Ovary (tissue), 10 donors: ENCODE measurements at regions of chr1 and their contacts with region 1.

Region 1: DNA sequence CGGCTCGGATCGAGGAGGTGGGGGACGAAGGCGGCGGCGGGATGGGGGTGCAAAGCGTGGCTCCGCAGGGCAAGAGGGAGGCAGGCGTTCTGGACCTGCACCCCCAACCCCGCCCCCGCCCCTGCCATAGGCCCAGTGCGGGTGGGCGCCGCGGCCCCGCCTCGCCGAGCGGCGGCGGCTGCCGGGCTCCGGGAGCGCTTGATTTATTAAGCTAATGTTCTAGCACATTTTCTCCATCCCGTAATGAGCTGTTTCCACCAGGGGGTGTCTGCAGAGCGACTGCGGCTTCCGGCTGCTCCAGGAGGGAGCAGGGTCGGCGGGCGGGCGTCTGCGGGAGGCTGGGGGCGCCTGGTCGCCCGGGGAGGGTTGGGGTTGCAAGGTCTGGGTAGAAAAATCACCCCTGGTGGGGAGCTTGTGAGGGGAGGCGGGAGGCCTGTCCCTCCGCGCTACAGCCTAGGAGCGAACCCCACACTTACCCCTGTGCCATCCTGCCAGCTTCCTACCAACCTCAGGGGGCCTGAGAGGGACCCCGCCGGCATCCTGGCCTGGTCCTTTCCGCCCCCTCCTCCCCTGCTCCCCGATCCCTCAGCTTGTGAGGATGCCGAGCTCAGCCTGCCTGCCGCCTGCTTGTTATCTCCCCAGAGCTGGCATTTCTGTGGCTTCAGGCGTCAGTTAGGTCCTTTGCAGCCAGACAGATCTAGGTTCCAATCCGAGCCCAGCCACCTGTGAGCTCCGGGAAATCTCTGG is 48.5 kb upstream of the ACOT11 start:
- DNase-seq: peak; percentile 50 to 70 (median 57)
- H3K4me3 ChIP-seq: peak overlapping the region; percentile 36
- H3K27ac ChIP-seq: no peak overlapping the region
- H3K4me1 ChIP-seq: no peaks in the 10 kb centered on the region
- H3K27me3 ChIP-seq: no peaks in the 10 kb centered on the region
- CTCF ChIP-seq: peak in 2 of 3 donors; percentile 15 to 17
- EP300 ChIP-seq: no peak
- POLR2A ChIP-seq: no peak

Region 2: GRCh38 chr1:53860967-53861411 is 638.5 kb before region 1 on chr1:
- intact Hi-C with region 1: loop called in 1 of 4 experiments (anchors 10 kb)
- DNase-seq: peak in 3 of 5 donors; percentile 26 to 37 (median 35)
- H3K4me3 ChIP-seq: no peak overlapping the region
- H3K27ac ChIP-seq: no peak overlapping the region
- H3K4me1 ChIP-seq: no peaks in the 10 kb centered on the region
- H3K27me3 ChIP-seq: no peaks in the 10 kb centered on the region
- CTCF ChIP-seq: peak; percentile 44 to 53 (median 49)
- EP300 ChIP-seq: no peak
- POLR2A ChIP-seq: no peak

Region 3: DNA sequence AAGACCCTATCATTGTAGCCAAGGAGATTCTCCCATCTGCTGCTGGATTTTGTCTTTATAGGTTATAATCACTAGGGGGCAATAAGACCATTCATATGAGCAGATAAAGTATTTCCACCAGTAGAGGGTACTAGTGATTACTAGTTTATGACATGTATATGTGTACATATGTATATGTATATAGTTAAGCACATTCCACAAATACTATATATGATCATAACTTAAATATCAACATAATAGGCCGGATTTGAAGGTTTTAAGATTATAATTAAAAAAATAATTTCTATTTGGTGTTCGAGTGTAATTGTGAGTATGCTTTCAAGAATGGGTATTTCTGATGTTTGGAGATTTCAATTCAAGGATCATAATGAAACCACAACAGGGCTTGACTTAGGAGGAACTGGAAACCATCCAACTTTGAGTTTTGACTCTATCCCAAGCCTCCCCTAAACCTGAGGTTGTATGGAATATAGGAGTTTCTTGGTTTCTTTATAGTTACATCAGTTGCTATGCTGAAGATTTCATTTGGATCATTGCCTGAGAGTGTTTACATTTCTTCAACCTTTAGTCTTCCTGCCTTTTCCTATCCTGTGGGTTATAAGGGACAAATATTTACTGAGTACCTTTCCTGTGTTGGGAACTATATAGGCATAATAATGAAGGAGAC is 429.2 kb before region 1 on chr1:
- intact Hi-C with region 1: loop called (anchors 5 to 10 kb)
- DNase-seq: no peak
- H3K4me3 ChIP-seq: no peak overlapping the region
- H3K27ac ChIP-seq: no peak overlapping the region
- H3K4me1 ChIP-seq: peaks cover 1% of the 10 kb centered on the region
- H3K27me3 ChIP-seq: no peaks in the 10 kb centered on the region
- CTCF ChIP-seq: peak; percentile 45 to 89 (median 73)
- EP300 ChIP-seq: no peak
- POLR2A ChIP-seq: no peak

Region 4: DNA sequence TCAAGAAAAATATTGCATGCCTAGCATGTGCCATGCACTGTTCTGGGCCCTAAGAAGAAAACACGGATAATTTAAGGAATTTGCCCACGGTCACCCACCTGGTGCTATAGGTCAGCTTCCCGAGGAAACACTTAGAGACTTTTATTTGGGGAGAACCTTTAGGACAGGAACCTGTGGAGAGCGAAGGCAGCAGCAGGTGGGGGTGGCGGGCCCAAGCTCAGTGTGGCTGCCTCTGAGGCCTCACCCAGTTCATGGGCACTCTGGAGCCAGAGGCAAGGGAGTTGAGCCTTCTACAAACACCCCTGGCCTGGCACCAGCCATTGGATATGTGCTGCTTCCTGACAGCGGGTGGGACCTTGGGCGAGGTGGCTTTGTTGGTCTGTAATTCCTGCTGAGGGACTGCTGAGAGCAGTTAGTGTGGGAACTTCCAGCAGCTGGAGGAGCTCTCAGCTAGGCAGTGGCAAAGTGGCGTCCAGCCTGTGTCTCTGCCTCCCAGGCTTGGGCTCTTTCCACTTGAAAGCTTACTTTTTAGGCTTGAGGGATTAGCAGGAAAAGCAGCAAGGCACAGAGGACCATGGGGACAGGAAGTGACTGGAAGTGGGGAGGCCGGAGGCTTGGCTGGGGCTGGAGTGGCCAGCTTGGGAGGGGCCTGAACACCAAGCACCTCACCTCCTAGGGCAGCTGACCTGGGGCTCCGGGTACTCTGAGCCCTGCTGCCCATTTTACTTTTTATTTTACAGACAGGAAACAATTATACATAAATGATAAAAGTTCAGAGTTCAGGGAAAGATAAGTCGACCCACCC is 280.4 kb before region 1 on chr1:
- intact Hi-C with region 1: loop called in 1 of 4 experiments (anchors 10 kb)
- DNase-seq: peak in 1 of 5 donors; percentile 25
- H3K4me3 ChIP-seq: no peak overlapping the region
- H3K27ac ChIP-seq: peak overlapping the region; percentile 45 to 59
- H3K4me1 ChIP-seq: peaks cover 14% of the 10 kb centered on the region
- H3K27me3 ChIP-seq: no peaks in the 10 kb centered on the region
- CTCF ChIP-seq: no peak
- EP300 ChIP-seq: no peak
- POLR2A ChIP-seq: no peak

Region 5: DNA sequence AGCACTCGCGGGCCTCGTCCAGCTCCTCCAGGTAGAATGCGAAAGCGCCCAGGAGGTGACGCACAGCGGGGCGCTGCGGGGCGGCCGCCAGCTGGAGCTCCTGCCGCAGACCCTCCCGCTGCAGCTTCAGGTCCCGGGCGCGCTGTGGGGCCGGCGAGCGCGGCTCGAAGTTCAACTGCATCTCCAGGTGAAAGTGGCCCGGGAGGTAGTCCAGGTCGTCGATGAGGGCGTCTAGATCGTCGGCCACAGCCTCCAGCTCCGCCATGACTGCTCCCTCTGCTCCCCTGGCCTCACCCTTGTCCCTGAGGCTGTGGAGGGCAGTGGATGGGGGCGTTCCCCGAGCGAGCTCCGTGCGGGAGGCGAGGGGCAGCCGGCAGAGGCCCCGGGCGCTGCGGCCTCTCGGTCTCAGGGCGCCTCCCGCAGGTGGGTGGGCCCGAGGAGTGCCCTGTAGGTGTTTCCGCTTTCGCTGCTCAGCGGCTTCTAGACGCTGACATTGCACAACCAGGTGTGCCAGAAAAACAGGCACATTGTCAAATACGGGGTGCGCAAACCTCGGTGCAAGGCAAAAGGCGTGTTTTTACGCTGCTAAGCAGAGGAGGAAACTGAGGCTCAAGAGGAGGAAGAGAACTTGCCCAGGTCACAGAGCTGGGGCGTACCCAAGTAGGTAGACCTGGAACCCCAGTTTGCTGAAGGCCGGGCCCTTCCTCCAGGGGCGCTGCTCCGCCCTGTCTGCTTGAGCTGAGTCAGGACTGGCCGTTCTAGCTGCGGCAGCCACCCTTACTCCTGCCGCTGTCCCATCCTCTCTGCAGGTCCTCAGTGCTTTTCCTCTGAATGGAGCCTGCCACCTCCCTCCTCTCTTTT is 301.6 kb after region 1 on chr1 and contains the start of gene TTC22:
- intact Hi-C with region 1: loop called in 1 of 4 experiments (anchors 10 kb)
- DNase-seq: peak in 3 of 5 donors; percentile 34 to 57 (median 44)
- H3K4me3 ChIP-seq: peak within 1 kb of the TSS; percentile 38
- H3K27ac ChIP-seq: no peak within 1 kb of the TSS
- H3K4me1 ChIP-seq: no peaks in the 10 kb centered on the region
- H3K27me3 ChIP-seq: no peaks in the 10 kb centered on the region
- CTCF ChIP-seq: no peak
- EP300 ChIP-seq: no peak
- POLR2A ChIP-seq: no peak
- total RNA-seq, gene TTC22: 0.13 to 9.1 (median 1.1) TPM

Region 6: GRCh38 chr1:54810100-54810942 is 310.8 kb after region 1 on chr1:
- intact Hi-C with region 1: loop called in 2 of 4 experiments (anchors 10 kb)
- DNase-seq: peak; percentile 48 to 80 (median 64)
- H3K4me3 ChIP-seq: no peak overlapping the region
- H3K27ac ChIP-seq: no peak overlapping the region
- H3K4me1 ChIP-seq: no peaks in the 10 kb centered on the region
- H3K27me3 ChIP-seq: no peaks in the 10 kb centered on the region
- CTCF ChIP-seq: peak; percentile 39 to 84 (median 76)
- EP300 ChIP-seq: no peak
- POLR2A ChIP-seq: no peak